ENCODE measurements at regions of chr9 and their contacts with region 1.

Region 1: GRCh38 chr9:124280176-124280691 is 22.5 kb downstream of the NEK6 start:
- DNase-seq: peak in 1 of 2 donors; percentile 71
- ATAC-seq: peak; percentile 44 to 79 (median 64)
- H3K4me3 ChIP-seq: no peak overlapping the region
- H3K27ac ChIP-seq: peak overlapping the region; percentile 3 to 87 (median 62)
- H3K4me1 ChIP-seq: peaks cover 27 to 88% (median 66%) of the 10 kb centered on the region in 9 donors
- H3K27me3 ChIP-seq: no peaks in the 10 kb centered on the region
- CTCF ChIP-seq: no peak

Region 2: DNA sequence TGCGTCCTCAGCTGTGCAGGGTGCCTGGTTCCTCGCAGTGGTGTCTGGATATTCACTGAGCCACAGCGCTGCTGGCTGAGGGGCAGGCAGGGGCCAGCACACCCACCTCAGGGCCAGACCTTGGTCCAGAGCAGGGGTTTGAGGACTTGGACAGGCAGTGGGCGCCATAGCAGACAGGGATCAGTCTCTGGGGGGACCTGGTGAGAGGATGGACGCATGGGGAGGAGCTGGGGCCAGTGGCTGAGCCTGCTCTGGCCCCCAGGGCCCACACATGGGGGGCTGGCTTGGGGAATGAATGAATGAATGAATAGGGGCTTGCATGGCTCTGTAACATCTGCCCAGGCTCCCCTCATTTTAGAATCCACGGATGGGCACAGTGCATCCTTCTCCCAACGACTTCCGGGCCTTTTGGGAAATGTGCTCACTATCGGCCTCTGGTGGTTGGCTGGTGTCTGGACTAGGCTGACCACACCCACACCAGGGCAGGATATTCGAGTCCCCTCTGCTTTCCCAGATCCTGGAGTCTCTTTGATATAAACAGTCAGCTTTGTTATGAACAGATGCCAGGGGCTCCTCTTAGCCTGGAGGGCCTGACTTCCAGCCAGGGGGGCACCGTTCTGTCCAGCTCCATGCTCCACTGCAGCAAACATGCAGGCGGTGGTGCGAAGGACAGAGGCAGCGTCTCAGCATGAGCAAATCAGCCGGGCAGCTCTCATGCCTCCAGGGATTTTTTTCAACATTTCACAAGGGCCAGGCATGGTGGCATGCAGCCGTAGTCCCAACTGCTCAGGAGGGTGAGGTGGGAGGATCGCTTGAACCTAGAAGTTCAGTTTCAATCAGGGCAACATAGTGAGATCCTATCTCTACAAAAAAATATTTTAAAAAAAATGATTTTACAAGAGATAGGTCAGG is 40.1 kb after region 1 on chr9:
- intact Hi-C with region 1: loop called in 1 of 10 experiments (anchors 5 kb)
- DNase-seq: peak; percentile 66 to 77
- ATAC-seq: peak; percentile 83 to 89 (median 88)
- H3K4me3 ChIP-seq: no peak overlapping the region
- H3K27ac ChIP-seq: no peak overlapping the region
- H3K4me1 ChIP-seq: peaks cover 0 to 15% (median 3%) of the 10 kb centered on the region in 9 donors
- H3K27me3 ChIP-seq: no peaks in the 10 kb centered on the region
- CTCF ChIP-seq: peak; percentile 73 to 92 (median 85)

Measured in heart right ventricle (tissue), 16 donors.